MCF 10A (cell line): ENCODE measurements at regions of chrX and their contacts with region 1.

Region 1: GRCh38 chrX:43255596-43255995 is 400.5 kb upstream of the MAOA start:
- DNase-seq: no peak
- H3K4me3 Mint-ChIP-seq: no peak overlapping the region
- H3K27ac Mint-ChIP-seq: no peak overlapping the region
- H3K4me1 Mint-ChIP-seq: no peaks in the 10 kb centered on the region
- H3K27me3 Mint-ChIP-seq: peaks cover 13% of the 10 kb centered on the region
- CTCF ChIP-seq: no peak

Region 2: DNA sequence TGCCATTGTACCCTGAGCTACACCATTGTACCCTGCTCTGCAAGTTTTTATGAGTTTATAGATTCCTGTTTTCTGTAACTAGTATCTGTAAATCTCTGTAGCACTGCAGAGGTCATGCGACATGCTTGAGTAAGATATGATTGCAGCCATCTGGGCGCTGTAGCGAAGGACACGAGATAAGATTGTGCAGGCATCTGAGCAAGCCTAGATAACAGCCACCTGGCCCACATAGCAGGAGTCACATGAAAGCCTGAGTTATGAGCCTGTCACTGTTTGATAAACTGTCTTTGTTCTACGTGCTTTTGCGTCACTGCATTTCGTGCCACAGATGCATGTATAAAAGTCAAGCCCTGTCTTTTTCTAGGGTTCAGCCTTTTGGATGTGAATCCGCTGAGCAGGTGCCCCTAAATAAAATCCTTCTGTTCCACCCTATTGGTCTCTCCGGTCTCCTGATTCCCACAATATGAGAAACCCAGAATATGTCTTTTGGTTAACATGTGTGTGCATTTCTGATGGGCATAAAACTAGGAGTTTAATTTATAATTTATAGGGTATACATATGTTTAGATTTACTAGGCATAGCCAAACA is 72.9 kb after region 1 on chrX:
- CTCF ChIA-PET with region 1: no interaction called
- POLR2A ChIA-PET with region 1: no interaction called
- intact Hi-C with region 1: loop called (anchors 2 kb)
- DNase-seq: no peak
- H3K4me3 Mint-ChIP-seq: no peak overlapping the region
- H3K27ac Mint-ChIP-seq: no peak overlapping the region
- H3K4me1 Mint-ChIP-seq: peaks cover 5% of the 10 kb centered on the region
- H3K27me3 Mint-ChIP-seq: peaks cover 33% of the 10 kb centered on the region
- CTCF ChIP-seq: no peak